Lower leg skin (tissue), 4 donors: ENCODE measurements at regions of chr6 and their contacts with region 1.

Region 1: DNA sequence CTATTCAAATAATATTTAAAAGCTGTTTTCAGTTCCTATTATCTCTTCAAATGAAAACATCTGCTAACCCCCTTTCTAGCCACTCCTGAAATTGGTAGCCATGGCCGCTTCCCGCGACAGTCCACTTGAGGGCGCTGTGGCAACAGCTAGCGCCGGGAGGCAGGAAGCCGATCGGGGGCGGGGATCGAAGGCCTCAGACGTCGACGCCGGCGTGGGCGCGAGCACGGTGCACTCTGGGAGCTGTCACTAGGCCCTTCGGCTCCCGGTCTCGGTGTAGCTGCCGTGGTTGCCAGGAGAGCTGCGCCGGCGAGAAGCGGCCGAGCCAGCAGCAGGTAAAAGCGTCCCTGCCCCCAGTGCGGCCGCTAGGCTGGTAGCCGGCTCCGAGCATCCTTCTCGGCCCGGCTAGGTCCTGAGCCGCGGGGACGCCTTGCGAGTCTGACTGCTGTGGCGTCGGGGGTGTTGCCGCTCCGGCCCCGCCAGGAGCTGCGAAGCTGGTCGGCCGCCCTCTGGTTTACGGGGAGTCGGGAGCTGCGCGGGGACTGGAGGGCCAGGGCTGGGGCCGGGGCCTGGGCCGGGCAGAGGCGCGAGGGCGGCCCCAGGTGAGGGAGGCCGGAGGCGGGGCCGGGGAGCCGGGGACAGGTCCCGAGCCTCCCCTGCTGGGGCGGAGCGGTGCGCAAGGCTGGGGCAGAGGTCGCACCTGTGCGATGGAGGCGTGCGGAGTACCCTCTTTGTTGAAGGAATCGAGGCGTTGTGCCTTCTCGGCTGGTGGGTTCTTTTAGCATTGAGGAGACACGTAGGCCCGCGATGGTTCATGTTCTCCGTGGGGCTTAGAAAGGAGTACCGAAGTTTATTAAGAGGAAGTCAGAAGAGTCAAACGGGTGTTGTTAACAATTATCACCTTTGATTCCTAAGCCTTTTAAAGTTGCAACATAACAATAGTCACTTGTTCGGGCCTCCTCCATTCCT is at the start of gene DOP1A:
- DNase-seq: peak; percentile 94 to 99
- H3K4me3 ChIP-seq: peak within 1 kb of the TSS; percentile 95
- CTCF ChIP-seq: peak in 1 of 3 donors; percentile 71
- POLR2A ChIP-seq: no peak
- total RNA-seq, gene DOP1A: 32.6 to 75.8 (median 49.3) TPM

Region 2: DNA sequence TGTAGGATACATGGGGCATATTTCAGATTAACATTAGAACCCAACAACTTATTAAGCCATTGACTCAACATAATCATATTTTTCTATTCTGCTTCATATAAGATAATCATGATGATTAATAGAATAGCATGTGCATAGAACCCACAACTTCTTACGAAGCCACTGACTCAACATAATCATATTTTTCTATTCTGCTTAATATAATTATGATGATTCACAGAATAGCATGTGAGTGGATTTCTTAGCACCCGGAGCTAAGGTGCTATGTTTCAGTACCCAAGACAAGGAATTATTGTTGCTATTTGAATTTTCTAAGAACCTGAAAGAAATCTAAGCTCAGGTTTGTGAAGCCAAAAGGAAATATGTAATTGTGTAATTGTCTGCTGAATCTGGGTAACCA is 1412.0 kb before region 1 on chr6:
- intact Hi-C with region 1: loop called (anchors 5 kb)
- DNase-seq: no peak
- H3K4me3 ChIP-seq: no peak overlapping the region
- CTCF ChIP-seq: no peak
- POLR2A ChIP-seq: no peak

Region 3: DNA sequence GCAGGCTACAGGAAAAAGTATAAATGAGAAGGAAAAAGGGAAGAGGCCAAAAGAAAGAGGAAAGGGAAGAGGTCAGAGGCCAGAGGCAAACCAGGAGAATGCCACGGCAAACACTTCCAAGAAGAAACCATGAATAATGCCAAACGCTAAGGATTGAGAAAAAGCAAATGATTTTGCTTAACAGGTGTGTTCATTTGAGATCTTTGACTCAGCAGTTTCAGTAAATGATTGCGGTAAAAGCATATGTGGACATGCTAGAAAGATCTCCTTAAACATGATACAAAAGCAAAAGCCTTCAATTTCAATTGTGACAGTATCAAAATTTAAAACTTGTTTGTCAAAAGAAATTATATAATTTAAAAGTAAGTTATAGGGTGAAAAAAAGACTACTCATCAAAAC is 72.7 kb before region 1 on chr6:
- intact Hi-C with region 1: no loop called
- DNase-seq: no peak
- H3K4me3 ChIP-seq: no peak overlapping the region
- CTCF ChIP-seq: no peak
- POLR2A ChIP-seq: no peak

Region 4: GRCh38 chr6:83038246-83038645 is 29.5 kb before region 1 on chr6:
- intact Hi-C with region 1: no loop called
- DNase-seq: no peak
- H3K4me3 ChIP-seq: no peak overlapping the region
- CTCF ChIP-seq: no peak
- POLR2A ChIP-seq: no peak